B cell (primary cell): ENCODE measurements at regions of chr2 and their contacts with region 1.

Region 1: GRCh38 chr2:108719149-108720044 is at the start of gene RANBP2:
- DNase-seq: peak; percentile 97
- ATAC-seq: peak; percentile 97
- H3K4me3 ChIP-seq: peak within 1 kb of the TSS; percentile 65 to 94 (median 85)
- H3K4me3 Mint-ChIP-seq: peak within 1 kb of the TSS; percentile 98
- H3K27ac ChIP-seq: peak within 1 kb of the TSS; percentile 83 to 89
- H3K27ac Mint-ChIP-seq: peak within 1 kb of the TSS; percentile 98
- H3K4me1 ChIP-seq: peaks cover 7 to 18% of the 10 kb centered on the region in 2 donors
- H3K4me1 Mint-ChIP-seq: peaks cover 22% of the 10 kb centered on the region
- H3K27me3 ChIP-seq: no peaks in the 10 kb centered on the region
- H3K27me3 Mint-ChIP-seq: no peaks in the 10 kb centered on the region
- CTCF ChIP-seq: no peak
- total RNA-seq, gene RANBP2: 67.0 and 69.5 TPM in 2 replicates

Region 2: GRCh38 chr2:108448678-108449493 is 270.5 kb before region 1 on chr2 and contains the start of gene GCC2:
- CTCF ChIA-PET with region 1: no interaction called
- POLR2A ChIA-PET with region 1: no interaction called
- intact Hi-C with region 1: loop called (anchors 1 kb)
- DNase-seq: peak; percentile 98
- ATAC-seq: peak; percentile 96
- H3K4me3 ChIP-seq: peak within 1 kb of the TSS; percentile 87 to 99 (median 95)
- H3K4me3 Mint-ChIP-seq: peak within 1 kb of the TSS; percentile 100
- H3K27ac ChIP-seq: peak within 1 kb of the TSS; percentile 94 to 98
- H3K27ac Mint-ChIP-seq: peak within 1 kb of the TSS; percentile 98
- H3K4me1 ChIP-seq: peaks cover 19 to 20% of the 10 kb centered on the region in 2 donors
- H3K4me1 Mint-ChIP-seq: peaks cover 43% of the 10 kb centered on the region
- H3K27me3 ChIP-seq: no peaks in the 10 kb centered on the region
- H3K27me3 Mint-ChIP-seq: no peaks in the 10 kb centered on the region
- CTCF ChIP-seq: no peak
- total RNA-seq, gene GCC2: 87.9 and 97.3 TPM in 2 replicates

Region 3: GRCh38 chr2:108704871-108705270 is 14.5 kb before region 1 on chr2:
- CTCF ChIA-PET with region 1: no interaction called
- POLR2A ChIA-PET with region 1: no interaction called
- intact Hi-C with region 1: no loop called
- DNase-seq: no peak
- ATAC-seq: no peak
- H3K4me3 ChIP-seq: no peak overlapping the region
- H3K4me3 Mint-ChIP-seq: no peak overlapping the region
- H3K27ac ChIP-seq: no peak overlapping the region
- H3K27ac Mint-ChIP-seq: no peak overlapping the region
- H3K4me1 ChIP-seq: no peaks in the 10 kb centered on the region
- H3K4me1 Mint-ChIP-seq: no peaks in the 10 kb centered on the region
- H3K27me3 ChIP-seq: no peaks in the 10 kb centered on the region
- H3K27me3 Mint-ChIP-seq: peaks cover 2% of the 10 kb centered on the region
- CTCF ChIP-seq: no peak

Region 4: GRCh38 chr2:108786354-108787199 is 67.2 kb after region 1 on chr2 and contains the start of gene CCDC138:
- CTCF ChIA-PET with region 1: no interaction called
- POLR2A ChIA-PET with region 1: no interaction called
- intact Hi-C with region 1: loop called (anchors 1 kb)
- DNase-seq: peak; percentile 92
- ATAC-seq: peak; percentile 97
- H3K4me3 ChIP-seq: peak within 1 kb of the TSS; percentile 61 to 88 (median 70)
- H3K4me3 Mint-ChIP-seq: peak within 1 kb of the TSS; percentile 99
- H3K27ac ChIP-seq: peak within 1 kb of the TSS; percentile 69 to 86
- H3K27ac Mint-ChIP-seq: peak within 1 kb of the TSS; percentile 91
- H3K4me1 ChIP-seq: peaks cover 6 to 7% of the 10 kb centered on the region in 2 donors
- H3K4me1 Mint-ChIP-seq: peaks cover 12% of the 10 kb centered on the region
- H3K27me3 ChIP-seq: no peaks in the 10 kb centered on the region
- H3K27me3 Mint-ChIP-seq: no peaks in the 10 kb centered on the region
- CTCF ChIP-seq: no peak
- total RNA-seq, gene CCDC138: 11.4 and 16.3 TPM in 2 replicates